GM12878 (cell line): ENCODE measurements at regions of chrX and their contacts with region 1.

Region 1: GRCh38 chrX:135985141-135985972 is at the start of gene SLC9A6:
- DNase-seq: no peak
- ATAC-seq: peak; percentile 96
- H3K4me3 ChIP-seq: peak within 1 kb of the TSS; percentile 68
- H3K27ac ChIP-seq: peak within 1 kb of the TSS; percentile 65
- H3K4me1 ChIP-seq: no peaks in the 10 kb centered on the region
- H3K27me3 ChIP-seq: no peaks in the 10 kb centered on the region
- CTCF ChIP-seq: no peak
- EP300 ChIP-seq: no peak
- POLR2A ChIP-seq: peak; percentile 72
- RAD21 ChIP-seq: no peak
- polyA plus RNA-seq, gene SLC9A6: 4.5 TPM

Region 2: DNA sequence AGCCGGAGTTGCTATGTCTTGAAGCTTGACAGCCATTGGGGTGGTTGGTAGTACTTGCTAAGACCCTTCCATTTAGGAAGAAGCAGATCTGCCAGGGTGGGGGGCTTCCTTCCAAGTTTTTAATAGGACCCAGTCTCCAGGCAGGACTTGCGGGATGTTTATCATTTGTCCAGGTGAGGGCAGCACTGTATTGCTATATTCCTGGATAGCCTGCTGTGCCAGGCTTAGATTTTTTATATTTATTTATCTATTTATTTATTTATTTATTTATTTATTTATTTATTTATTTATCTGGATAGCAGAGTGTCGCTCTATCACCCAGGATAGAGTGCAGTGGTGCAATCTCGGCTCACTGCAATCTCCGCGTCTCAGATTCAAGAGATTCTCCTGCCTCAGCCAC is 359.4 kb before region 1 on chrX:
- CTCF ChIA-PET with region 1: no interaction called
- POLR2A ChIA-PET with region 1: no interaction called
- RAD21 ChIA-PET with region 1: no interaction called
- SMC1A ChIA-PET with region 1: no interaction called
- in situ Hi-C with region 1: no loop called
- intact Hi-C with region 1: no loop called
- DNase-seq: no peak
- ATAC-seq: no peak
- H3K4me3 ChIP-seq: no peak overlapping the region
- H3K27ac ChIP-seq: no peak overlapping the region
- H3K4me1 ChIP-seq: no peaks in the 10 kb centered on the region
- H3K27me3 ChIP-seq: no peaks in the 10 kb centered on the region
- CTCF ChIP-seq: peak in 1 of 3 experiments; percentile 13; a peak in 1 of 6 replicates
- EP300 ChIP-seq: no peak
- POLR2A ChIP-seq: no peak
- RAD21 ChIP-seq: no peak

Region 3: GRCh38 chrX:136021160-136021559 is 35.8 kb after region 1 on chrX:
- CTCF ChIA-PET with region 1: no interaction called
- POLR2A ChIA-PET with region 1: no interaction called
- RAD21 ChIA-PET with region 1: no interaction called
- SMC1A ChIA-PET with region 1: no interaction called
- in situ Hi-C with region 1: no loop called
- intact Hi-C with region 1: loop called (anchors 2 kb)
- DNase-seq: peak; percentile 35
- ATAC-seq: peak; percentile 90
- H3K4me3 ChIP-seq: no peak overlapping the region
- H3K27ac ChIP-seq: no peak overlapping the region; the same call in 1 of the 2 replicates
- H3K4me1 ChIP-seq: no peaks in the 10 kb centered on the region; the same call in 1 of the 2 replicates
- H3K27me3 ChIP-seq: no peaks in the 10 kb centered on the region
- CTCF ChIP-seq: no peak
- EP300 ChIP-seq: no peak
- POLR2A ChIP-seq: no peak
- RAD21 ChIP-seq: no peak